Posterior cingulate gyrus (tissue), 11 donors: ENCODE measurements at regions of chr2 and their contacts with region 1.

Region 1: DNA sequence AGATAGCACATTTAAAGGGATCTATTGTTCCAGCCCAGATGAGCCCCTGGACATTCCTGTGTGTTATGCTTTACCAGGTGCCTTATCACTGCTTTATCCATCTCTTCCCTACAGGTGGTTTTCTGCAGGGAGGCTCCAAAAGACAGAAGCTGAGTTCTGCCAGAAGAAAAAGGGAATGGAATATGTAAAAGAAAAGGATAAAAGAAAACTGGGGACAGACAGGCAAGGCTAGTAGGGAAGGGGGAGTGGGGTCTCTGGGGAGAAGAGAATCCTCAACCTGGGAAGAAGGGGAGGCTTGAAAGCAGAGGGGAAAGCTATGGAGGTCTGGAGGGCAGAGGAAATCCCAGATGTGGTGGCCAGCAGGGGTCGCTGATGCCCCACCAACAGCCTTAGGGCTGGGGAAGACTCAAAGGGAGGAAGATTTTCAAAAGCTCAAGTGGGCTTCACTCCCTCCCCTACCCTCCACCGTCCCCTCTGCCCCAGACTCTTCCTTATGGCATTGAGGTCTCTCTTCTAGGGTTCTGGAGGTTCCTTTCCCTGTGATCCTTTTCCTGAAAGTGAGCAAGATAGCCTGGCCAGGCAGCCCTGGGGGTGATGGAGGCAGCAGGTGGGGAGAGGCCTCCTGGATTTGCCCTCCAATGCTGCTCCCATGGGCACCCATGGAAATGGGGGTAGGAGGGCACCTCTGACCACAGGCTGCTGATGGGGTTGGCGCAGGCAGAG is 178.1 kb upstream of the PKDCC start:
- DNase-seq: peak; percentile 65 to 96 (median 84)

Region 2: DNA sequence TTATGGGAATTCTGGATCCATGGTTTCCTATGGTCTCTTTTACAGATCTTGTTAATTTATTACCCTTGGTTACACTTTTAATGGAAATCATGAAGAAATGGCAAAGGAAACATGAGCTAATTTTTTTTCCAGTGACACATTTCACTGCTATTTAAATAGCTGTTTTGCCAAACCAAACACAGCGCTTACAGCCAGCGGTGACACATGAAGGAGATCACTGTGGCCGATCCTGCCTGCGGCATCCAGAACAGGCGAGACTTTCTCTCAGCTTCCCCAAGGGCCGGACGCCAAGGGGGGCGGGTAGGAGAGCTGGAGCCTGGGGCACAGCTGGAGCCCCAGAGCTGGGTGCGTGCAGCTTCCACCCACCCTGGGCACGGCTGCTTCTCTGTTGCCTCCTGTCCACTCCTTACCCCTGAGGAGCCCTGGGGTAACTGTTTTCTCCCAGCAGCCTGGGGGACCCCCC is 96.8 kb after region 1 on chr2:
- intact Hi-C with region 1: loop called (anchors 10 kb)
- DNase-seq: peak; percentile 65 to 97 (median 83)

Region 3: GRCh38 chr2:42086500-42086953 is 216.8 kb after region 1 on chr2:
- intact Hi-C with region 1: loop called (anchors 1 kb)
- DNase-seq: peak in 5 of 10 donors; percentile 53 to 90 (median 59)

Region 4: GRCh38 chr2:42360890-42361727 is 491.4 kb after region 1 on chr2 and contains the start of gene COX7A2L:
- intact Hi-C with region 1: loop called (anchors 10 kb)
- DNase-seq: peak; percentile 96 to 100 (median 98)